B cell (primary cell): ENCODE measurements at regions of chr4 and their contacts with region 1.

Region 1: DNA sequence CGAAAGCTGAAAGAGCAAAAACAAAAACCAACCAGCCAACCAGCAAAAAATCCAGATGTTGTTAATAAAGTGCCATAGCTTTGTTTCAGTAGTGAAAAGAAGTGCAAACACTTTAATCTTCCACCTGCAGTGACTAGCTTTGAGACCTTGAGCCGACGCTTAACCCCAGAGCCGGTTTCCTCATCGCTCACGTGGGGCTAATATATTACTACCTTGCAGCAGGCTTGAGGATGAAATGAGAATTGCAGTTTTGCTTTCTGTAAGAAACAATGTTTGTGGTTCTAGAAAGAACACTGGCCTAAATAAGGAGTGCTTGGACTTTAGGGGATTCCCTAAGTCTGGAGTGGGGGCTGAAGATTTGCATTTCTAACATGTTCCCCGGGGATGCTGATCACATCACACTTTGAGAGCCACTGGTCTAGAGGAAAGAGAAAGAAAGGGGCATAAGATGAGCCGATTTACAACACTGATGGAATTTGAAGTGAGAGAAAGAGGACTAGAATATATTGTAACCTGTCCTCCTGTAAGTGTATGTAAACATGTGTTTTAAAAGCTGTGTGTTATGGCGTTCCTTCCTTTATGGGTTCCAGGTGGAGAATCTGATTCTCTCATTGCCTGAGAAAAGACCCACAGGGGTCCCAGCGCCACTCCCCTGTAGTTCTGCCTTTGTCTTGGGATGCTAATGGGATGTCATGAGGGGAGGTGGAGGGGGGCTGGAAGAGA is 1.4 kb downstream of the FGF2 start:
- DNase-seq: peak; percentile 67
- ATAC-seq: peak; percentile 59
- H3K4me3 ChIP-seq: peak overlapping the region; percentile 47 to 73 (median 58)
- H3K4me3 Mint-ChIP-seq: peak overlapping the region; percentile 87
- H3K27ac ChIP-seq: no peak overlapping the region
- H3K27ac Mint-ChIP-seq: peak overlapping the region; percentile 47
- H3K4me1 ChIP-seq: peaks cover 17 to 18% of the 10 kb centered on the region in 2 donors
- H3K4me1 Mint-ChIP-seq: peaks cover 19% of the 10 kb centered on the region
- H3K27me3 ChIP-seq: peaks cover 3 to 55% (median 43%) of the 10 kb centered on the region in 4 experiments
- H3K27me3 Mint-ChIP-seq: peaks cover 80% of the 10 kb centered on the region
- CTCF ChIP-seq: peak; percentile 17

Region 2: DNA sequence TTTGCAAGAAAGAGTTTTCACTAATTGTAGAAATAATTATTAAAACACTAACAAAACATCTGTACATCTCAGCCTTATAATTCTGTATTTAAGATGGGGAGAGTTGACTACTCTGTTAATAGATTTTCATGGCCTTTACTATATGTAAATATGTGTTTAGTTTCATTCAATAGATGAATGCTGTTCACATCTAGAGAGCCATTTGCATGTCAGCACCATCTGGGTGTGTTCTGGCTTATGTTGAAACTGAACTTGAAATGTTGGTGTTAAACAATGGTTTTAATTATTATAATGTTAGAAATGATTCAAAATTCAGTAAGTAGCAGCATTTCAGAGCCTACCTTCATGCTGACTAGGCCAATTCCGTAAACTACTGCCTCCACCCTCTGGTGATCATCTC is 551.7 kb before region 1 on chr4:
- CTCF ChIA-PET with region 1: no interaction called
- POLR2A ChIA-PET with region 1: no interaction called
- intact Hi-C with region 1: no loop called
- DNase-seq: no peak
- ATAC-seq: no peak
- H3K4me3 ChIP-seq: no peak overlapping the region
- H3K4me3 Mint-ChIP-seq: no peak overlapping the region
- H3K27ac ChIP-seq: no peak overlapping the region
- H3K27ac Mint-ChIP-seq: no peak overlapping the region
- H3K4me1 ChIP-seq: no peaks in the 10 kb centered on the region
- H3K4me1 Mint-ChIP-seq: no peaks in the 10 kb centered on the region
- H3K27me3 ChIP-seq: no peaks in the 10 kb centered on the region
- H3K27me3 Mint-ChIP-seq: no peaks in the 10 kb centered on the region
- CTCF ChIP-seq: no peak

Region 3: GRCh38 chr4:122764821-122765215 is 63.2 kb before region 1 on chr4:
- CTCF ChIA-PET with region 1: no interaction called
- POLR2A ChIA-PET with region 1: no interaction called
- intact Hi-C with region 1: loop called (anchors 5 kb)
- DNase-seq: no peak
- ATAC-seq: no peak
- H3K4me3 ChIP-seq: no peak overlapping the region
- H3K4me3 Mint-ChIP-seq: no peak overlapping the region
- H3K27ac ChIP-seq: no peak overlapping the region
- H3K27ac Mint-ChIP-seq: no peak overlapping the region
- H3K4me1 ChIP-seq: peaks cover 13 to 16% of the 10 kb centered on the region in 2 donors
- H3K4me1 Mint-ChIP-seq: peaks cover 20% of the 10 kb centered on the region
- H3K27me3 ChIP-seq: no peaks in the 10 kb centered on the region
- H3K27me3 Mint-ChIP-seq: peaks cover 3% of the 10 kb centered on the region
- CTCF ChIP-seq: no peak

Region 4: GRCh38 chr4:122803788-122804208 is 24.2 kb before region 1 on chr4:
- CTCF ChIA-PET with region 1: no interaction called
- POLR2A ChIA-PET with region 1: no interaction called
- intact Hi-C with region 1: no loop called
- DNase-seq: peak; percentile 5
- ATAC-seq: no peak
- H3K4me3 ChIP-seq: no peak overlapping the region
- H3K4me3 Mint-ChIP-seq: no peak overlapping the region
- H3K27ac ChIP-seq: no peak overlapping the region
- H3K27ac Mint-ChIP-seq: no peak overlapping the region
- H3K4me1 ChIP-seq: no peaks in the 10 kb centered on the region
- H3K4me1 Mint-ChIP-seq: no peaks in the 10 kb centered on the region
- H3K27me3 ChIP-seq: peaks cover 0 to 2% (median 0%) of the 10 kb centered on the region in 4 experiments
- H3K27me3 Mint-ChIP-seq: peaks cover 8% of the 10 kb centered on the region
- CTCF ChIP-seq: no peak

Region 5: DNA sequence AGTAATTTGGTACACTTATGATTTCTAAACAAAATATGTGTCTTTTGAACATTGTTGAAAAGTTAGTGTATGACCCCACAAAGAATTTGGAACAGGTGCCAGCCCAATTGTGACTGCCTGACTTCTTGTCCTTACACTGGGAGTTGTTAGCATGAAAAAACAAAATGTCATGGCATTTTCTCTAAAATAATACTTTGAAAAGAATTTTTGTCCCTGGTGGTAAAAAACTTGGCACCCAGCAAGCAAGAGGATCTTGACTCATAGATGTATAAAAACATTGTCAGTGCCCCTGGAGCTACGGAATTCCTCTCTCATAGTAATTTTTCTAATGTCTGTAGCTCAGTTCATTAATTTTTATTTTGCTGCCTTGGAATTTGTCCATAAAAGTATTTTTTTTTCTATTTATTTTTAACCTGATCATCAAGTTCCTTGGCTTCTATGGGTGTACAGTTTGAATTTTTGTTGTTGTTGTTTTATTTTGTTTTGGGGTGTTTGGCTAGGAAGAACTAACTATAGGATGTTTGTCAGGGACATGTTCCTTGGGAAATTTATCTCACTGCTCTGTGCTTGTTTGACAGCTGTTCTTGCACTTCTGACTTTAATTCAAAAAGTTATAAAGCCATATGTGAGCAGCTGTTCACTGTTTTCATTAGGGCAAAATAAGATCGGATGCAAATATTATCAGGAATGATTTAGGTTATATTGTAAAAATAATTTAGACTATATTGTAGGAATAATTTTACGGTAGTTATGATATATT is 189.8 kb after region 1 on chr4:
- CTCF ChIA-PET with region 1: no interaction called
- POLR2A ChIA-PET with region 1: no interaction called
- intact Hi-C with region 1: no loop called
- DNase-seq: no peak
- ATAC-seq: no peak
- H3K4me3 ChIP-seq: no peak overlapping the region
- H3K4me3 Mint-ChIP-seq: no peak overlapping the region
- H3K27ac ChIP-seq: no peak overlapping the region
- H3K27ac Mint-ChIP-seq: no peak overlapping the region
- H3K4me1 ChIP-seq: no peaks in the 10 kb centered on the region
- H3K4me1 Mint-ChIP-seq: no peaks in the 10 kb centered on the region
- H3K27me3 ChIP-seq: no peaks in the 10 kb centered on the region
- H3K27me3 Mint-ChIP-seq: no peaks in the 10 kb centered on the region
- CTCF ChIP-seq: no peak